Ovary (tissue), 10 donors: ENCODE measurements at regions of chr1 and their contacts with region 1.

Region 1: DNA sequence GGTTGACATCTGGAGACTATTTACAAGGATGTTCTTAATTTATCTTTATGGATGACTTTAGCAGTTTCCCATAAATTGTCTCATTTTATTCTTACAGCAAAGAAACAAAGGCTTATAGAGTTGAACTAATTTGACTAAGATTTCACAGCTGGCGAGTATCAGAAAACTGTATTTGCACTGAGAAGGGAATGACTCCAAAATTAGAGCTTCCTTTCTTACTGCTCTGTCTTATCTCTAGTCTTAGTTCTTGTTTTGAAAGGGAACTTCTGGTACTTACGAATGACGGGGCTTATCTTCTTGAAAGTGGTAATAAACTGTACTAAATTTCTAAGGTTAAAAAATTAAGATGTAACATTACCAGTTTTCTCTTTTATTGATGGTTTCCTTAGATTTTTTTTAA is 13.6 kb downstream of the CNST start:
- DNase-seq: no peak
- H3K4me3 ChIP-seq: no peak overlapping the region
- H3K27ac ChIP-seq: peak overlapping the region in 1 of 2 donors; percentile 30
- H3K4me1 ChIP-seq: peaks cover 27% of the 10 kb centered on the region
- H3K27me3 ChIP-seq: no peaks in the 10 kb centered on the region
- CTCF ChIP-seq: no peak
- EP300 ChIP-seq: no peak
- POLR2A ChIP-seq: no peak

Region 2: GRCh38 chr1:246351721-246352120 is 228.1 kb before region 1 on chr1:
- intact Hi-C with region 1: no loop called
- DNase-seq: no peak
- H3K4me3 ChIP-seq: no peak overlapping the region
- H3K27ac ChIP-seq: no peak overlapping the region
- H3K4me1 ChIP-seq: no peaks in the 10 kb centered on the region
- H3K27me3 ChIP-seq: no peaks in the 10 kb centered on the region
- CTCF ChIP-seq: no peak
- EP300 ChIP-seq: no peak
- POLR2A ChIP-seq: no peak

Region 3: GRCh38 chr1:246447501-246447900 is 132.3 kb before region 1 on chr1:
- intact Hi-C with region 1: no loop called
- DNase-seq: no peak
- H3K4me3 ChIP-seq: no peak overlapping the region
- H3K27ac ChIP-seq: no peak overlapping the region
- H3K4me1 ChIP-seq: no peaks in the 10 kb centered on the region
- H3K27me3 ChIP-seq: no peaks in the 10 kb centered on the region
- CTCF ChIP-seq: no peak
- EP300 ChIP-seq: no peak
- POLR2A ChIP-seq: no peak

Region 4: DNA sequence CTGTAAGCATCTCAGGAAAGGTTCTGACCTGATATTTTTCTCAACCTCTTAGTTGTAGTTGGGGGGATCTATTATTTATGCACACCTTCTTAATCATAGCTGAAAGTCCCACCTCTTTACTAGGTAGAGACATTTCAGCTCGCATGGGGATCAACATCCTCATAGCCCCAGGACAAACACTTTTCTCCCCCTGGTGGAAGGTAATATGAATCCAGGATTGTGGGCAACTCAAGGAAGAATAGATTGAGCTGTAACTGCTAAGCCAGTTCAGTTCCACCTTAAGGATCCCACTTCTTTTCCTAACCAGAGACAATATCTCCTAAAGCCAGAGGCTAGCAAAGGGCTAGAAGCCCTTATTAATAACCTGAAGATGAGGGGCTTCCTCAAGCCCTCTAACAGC is 47.3 kb before region 1 on chr1:
- intact Hi-C with region 1: no loop called
- DNase-seq: no peak
- H3K4me3 ChIP-seq: no peak overlapping the region
- H3K27ac ChIP-seq: no peak overlapping the region
- H3K4me1 ChIP-seq: no peaks in the 10 kb centered on the region
- H3K27me3 ChIP-seq: no peaks in the 10 kb centered on the region
- CTCF ChIP-seq: no peak
- EP300 ChIP-seq: no peak
- POLR2A ChIP-seq: no peak

Region 5: GRCh38 chr1:247209396-247209795 is 629.6 kb after region 1 on chr1:
- intact Hi-C with region 1: loop called in 1 of 4 experiments (anchors 5 kb)
- DNase-seq: no peak
- H3K4me3 ChIP-seq: peak overlapping the region; percentile 84
- H3K27ac ChIP-seq: no peak overlapping the region
- H3K4me1 ChIP-seq: peaks cover 3% of the 10 kb centered on the region
- H3K27me3 ChIP-seq: no peaks in the 10 kb centered on the region
- CTCF ChIP-seq: no peak
- EP300 ChIP-seq: no peak
- POLR2A ChIP-seq: no peak